ENCODE measurements at regions of chr1 and their contacts with region 1.

Region 1: DNA sequence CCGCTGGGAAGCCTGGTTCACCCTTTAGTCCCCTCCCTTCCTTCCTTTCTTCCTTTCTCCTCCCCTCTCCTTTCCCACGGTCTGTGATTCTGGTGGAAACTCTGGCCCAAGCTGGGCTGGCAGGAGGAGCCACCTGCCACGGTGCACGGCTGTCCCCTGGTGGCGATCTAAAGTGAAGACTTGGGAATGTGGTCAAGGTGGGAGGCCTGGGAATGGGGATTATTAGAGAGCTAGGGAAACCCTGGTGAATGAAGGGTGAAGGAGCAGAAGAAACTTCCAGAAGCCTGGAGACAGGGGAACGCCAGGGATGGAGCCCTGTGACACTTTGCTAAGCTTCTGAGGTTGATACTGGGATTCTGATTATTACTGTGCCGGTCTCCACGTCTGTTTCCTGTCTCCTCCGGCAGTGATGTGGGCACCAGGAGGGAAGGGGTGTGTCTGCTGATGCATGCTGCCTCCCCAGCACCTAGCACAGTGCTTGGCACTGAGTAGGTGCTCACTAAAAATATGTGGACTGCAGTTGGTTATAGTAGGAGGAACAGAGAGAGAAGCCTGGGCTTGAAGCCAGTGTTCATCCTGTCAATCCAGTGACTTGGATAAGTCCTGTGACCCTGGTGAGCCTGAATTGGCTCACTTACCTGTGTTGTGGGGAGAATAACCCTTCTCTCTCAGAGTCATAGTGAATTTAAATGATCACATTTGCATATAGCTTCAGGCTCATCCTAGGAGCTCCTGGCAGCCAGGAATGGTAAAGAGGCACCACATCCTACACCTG is 71.2 kb upstream of the NBPF3 start:
- DNase-seq: peak; percentile 84
- ATAC-seq: peak; percentile 96
- H3K4me3 ChIP-seq: no peak overlapping the region
- H3K27ac ChIP-seq: no peak overlapping the region
- H3K4me1 ChIP-seq: no peaks in the 10 kb centered on the region
- H3K27me3 ChIP-seq: no peaks in the 10 kb centered on the region
- CTCF ChIP-seq: peak; percentile 99
- POLR2A ChIP-seq: peak; percentile 78
- RAD21 ChIP-seq: peak; percentile 100

Region 2: DNA sequence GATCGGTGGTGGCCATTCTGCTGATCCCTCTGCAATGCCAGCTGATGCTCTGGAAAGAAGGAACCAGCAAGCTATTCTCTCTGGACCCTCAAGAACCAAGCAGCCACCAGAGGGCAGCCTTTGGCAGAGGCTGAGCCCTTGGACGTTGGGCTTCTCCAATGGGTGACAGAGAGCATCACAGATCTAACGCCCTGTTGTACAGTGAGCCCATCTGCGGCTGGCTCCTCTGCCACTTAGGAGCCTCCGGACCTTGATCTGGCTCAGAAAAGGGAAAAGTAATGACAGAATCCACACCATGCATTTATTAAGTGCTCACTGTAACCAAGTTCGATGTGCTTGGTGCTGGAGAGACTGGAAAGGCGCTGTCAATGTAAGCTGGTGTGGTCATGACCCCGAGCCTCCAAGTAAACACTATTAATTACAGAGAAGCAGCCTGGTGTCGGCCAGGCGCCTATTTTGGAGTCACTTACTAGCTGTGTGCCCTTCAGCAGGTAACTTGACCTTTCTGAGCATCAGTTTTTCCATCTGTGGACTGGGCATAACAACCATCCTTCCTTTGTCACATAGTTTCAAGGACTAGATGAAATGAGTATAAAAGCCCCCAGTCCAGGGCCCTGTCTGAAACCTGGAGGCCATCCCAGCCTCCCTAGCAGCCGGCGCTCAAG is 113.3 kb before region 1 on chr1:
- CTCF ChIA-PET with region 1: interaction called, 15 read pairs
- POLR2A ChIA-PET with region 1: no interaction called
- dilution Hi-C with region 1: no loop called
- in situ Hi-C with region 1: no loop called
- intact Hi-C with region 1: loop called (anchors 1 kb)
- DNase-seq: peak; percentile 79
- ATAC-seq: peak; percentile 90
- H3K4me3 ChIP-seq: no peak overlapping the region
- H3K27ac ChIP-seq: no peak overlapping the region
- H3K4me1 ChIP-seq: peaks cover 8% of the 10 kb centered on the region
- H3K27me3 ChIP-seq: no peaks in the 10 kb centered on the region
- CTCF ChIP-seq: peak; percentile 85
- POLR2A ChIP-seq: 0 out of 2 replicates have a peak, but pooled peaks have one; percentile 40
- RAD21 ChIP-seq: peak; percentile 96

Region 3: DNA sequence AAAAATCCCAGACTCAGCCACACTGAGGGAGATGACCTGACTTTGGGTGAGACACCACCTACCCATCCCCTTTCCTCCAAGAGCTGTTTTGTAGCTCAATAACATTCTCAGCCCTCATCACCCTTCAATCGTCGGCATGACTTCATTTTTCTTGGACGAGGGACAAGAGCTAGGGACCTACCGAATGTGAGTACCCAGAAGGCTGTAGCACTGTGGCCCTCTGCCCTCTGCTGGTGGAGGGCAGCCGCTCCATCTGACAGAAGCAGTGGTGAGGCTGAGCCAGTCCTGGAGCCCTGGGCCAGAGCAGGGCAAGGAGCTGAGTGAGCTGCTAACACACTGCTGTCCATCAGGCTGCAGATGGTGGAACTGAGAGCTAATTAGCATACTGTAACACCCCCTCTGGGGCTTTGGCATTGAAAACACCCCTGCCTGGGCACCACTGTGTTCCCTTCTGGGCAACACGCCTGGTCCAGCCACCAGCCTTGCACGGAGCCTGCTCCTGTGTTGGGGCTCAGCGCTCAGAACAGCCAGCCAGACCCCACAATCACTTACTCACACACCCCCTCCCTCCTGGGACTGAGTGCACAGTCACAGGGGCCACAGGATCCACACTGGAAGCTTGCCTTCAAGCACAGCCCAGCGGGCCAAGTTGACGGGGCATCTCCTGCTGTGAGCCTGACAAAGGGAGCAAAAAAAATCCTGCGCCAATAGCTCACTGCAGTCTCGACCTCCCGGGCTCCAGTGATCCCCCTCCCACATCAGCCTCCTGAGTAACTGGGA is 122.3 kb after region 1 on chr1:
- CTCF ChIA-PET with region 1: interaction called, 11 read pairs
- POLR2A ChIA-PET with region 1: no interaction called
- dilution Hi-C with region 1: no loop called
- in situ Hi-C with region 1: no loop called
- intact Hi-C with region 1: loop called (anchors 2 kb)
- DNase-seq: peak; percentile 64
- ATAC-seq: peak; percentile 69
- H3K4me3 ChIP-seq: no peak overlapping the region
- H3K27ac ChIP-seq: no peak overlapping the region
- H3K4me1 ChIP-seq: peaks cover 6% of the 10 kb centered on the region
- H3K27me3 ChIP-seq: no peaks in the 10 kb centered on the region
- CTCF ChIP-seq: peak; percentile 64
- POLR2A ChIP-seq: no peak
- RAD21 ChIP-seq: peak; percentile 71

Region 4: GRCh38 chr1:21534674-21535378 is 166.1 kb after region 1 on chr1:
- CTCF ChIA-PET with region 1: no interaction called
- POLR2A ChIA-PET with region 1: no interaction called
- dilution Hi-C with region 1: no loop called
- in situ Hi-C with region 1: no loop called
- intact Hi-C with region 1: loop called (anchors 1 kb)
- DNase-seq: peak; percentile 77
- ATAC-seq: peak; percentile 91
- H3K4me3 ChIP-seq: no peak overlapping the region
- H3K27ac ChIP-seq: no peak overlapping the region
- H3K4me1 ChIP-seq: peaks cover 2% of the 10 kb centered on the region; the same call in 1 of the 2 replicates
- H3K27me3 ChIP-seq: peaks cover 24% of the 10 kb centered on the region
- CTCF ChIP-seq: peak; percentile 74
- POLR2A ChIP-seq: no peak
- RAD21 ChIP-seq: peak; percentile 75

Region 5: DNA sequence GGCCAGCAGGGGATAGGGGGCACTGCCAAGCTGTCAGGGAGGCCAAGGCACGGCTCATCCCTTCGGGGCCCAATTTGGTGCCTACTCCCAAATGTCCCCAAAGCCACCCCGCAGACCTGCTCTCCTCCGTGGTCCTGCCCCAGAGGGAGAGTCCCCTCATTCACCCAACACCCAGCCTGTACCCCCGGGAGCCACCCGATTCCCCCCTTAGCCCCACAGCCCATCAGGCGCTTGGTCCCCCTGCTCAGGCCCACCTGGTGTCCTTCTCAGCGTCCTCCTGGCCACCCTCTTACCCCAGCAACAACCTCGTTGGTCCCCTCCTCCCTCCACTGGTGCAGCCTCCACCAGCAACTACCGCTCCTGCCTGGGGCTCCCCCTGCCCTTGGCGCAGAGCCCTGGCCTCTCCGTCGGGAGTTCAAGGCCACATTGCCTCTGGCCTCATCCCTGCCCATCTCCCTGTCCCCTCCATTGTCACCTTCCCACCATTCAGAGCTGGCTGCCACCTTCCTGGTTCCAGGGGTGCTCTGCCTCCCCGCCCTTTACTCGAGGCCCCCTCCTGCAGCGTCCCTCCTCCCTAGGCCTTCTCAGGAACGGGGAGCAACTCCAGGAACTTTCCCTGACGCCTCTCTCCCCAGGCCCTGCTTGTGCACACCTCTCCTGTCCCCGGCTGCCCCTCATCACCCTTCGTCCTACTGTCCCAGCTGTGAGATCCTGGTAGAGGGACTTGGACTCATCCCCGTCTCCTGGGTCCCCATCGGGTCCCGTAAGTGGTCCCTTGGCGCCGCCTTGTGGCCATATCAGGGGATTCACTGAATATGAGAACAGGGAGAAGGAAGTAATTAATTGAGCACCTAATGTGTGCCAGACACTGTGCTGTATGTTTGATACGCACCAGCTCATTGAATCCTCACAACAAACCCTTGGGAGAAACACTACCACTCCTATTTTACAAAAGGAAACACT is 226.5 kb after region 1 on chr1:
- CTCF ChIA-PET with region 1: interaction called, 8 read pairs
- POLR2A ChIA-PET with region 1: no interaction called
- dilution Hi-C with region 1: no loop called
- in situ Hi-C with region 1: no loop called
- intact Hi-C with region 1: loop called (anchors 1 kb)
- DNase-seq: peak; percentile 36
- ATAC-seq: peak; percentile 70
- H3K4me3 ChIP-seq: no peak overlapping the region
- H3K27ac ChIP-seq: no peak overlapping the region
- H3K4me1 ChIP-seq: no peaks in the 10 kb centered on the region
- H3K27me3 ChIP-seq: peaks cover 22% of the 10 kb centered on the region
- CTCF ChIP-seq: peak; percentile 88
- POLR2A ChIP-seq: no peak
- RAD21 ChIP-seq: peak; percentile 94

Region 6: DNA sequence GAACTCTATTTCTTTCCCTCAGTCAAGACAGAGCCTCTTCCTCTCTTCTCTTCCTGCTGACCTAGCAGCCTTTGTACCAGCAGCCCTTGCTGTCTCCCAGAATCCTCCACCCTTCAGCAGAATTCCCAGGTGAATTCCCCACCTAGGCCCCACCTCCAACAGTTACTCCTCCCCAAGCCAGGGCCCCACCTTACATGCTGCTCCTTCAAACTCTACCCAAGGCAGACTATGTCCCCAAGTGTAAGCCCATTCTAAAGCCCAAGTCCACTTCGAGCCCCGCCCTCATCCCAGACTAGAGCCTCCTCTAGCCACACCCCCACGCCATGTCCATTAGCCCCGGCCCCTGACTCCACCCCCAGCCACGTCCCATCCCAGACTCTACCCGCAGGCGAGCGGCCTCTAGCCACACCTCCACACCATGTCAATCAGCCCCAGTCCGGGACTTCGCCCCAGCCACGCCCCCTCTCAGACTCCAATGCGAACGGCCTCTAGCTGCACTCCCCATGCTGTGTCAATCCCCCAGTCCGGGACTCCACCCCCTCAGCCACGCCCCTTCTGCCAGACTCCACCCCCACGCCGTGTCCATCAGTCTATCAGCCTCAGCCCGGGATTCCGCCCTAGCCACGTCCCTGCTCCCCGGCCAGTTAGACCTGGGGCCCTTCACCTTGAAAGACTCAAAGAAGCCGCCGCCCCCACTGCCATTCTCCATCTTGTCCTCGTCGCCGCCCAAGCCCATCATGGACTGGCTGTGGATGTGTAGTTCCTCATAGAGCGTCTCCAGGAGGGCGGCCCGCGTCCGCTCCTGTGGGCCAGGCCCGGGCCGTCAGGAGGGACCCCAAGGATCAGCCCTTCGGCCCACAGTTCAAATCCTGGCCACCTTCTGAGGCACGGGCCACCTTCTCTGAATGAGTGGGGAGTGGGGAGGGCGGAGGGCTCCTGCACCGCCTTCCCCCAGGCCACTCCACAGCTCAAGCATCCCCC is 239.1 kb after region 1 on chr1:
- CTCF ChIA-PET with region 1: no interaction called
- POLR2A ChIA-PET with region 1: no interaction called
- dilution Hi-C with region 1: no loop called
- in situ Hi-C with region 1: no loop called
- intact Hi-C with region 1: no loop called
- DNase-seq: peak; percentile 58
- ATAC-seq: peak; percentile 94
- H3K4me3 ChIP-seq: no peak overlapping the region
- H3K27ac ChIP-seq: no peak overlapping the region
- H3K4me1 ChIP-seq: peaks cover 3% of the 10 kb centered on the region; the same call in 1 of the 2 replicates
- H3K27me3 ChIP-seq: peaks cover 47% of the 10 kb centered on the region
- CTCF ChIP-seq: no peak
- POLR2A ChIP-seq: no peak
- RAD21 ChIP-seq: no peak

Measured in IMR-90 (cell line).